Activated CD4-positive, alpha-beta T cell treated with anti-CD3 and anti-CD28 coated beads, Interleukin-2, amount 10 ng/mL, durations not matched to agents 24 days and 14 days (primary cell): ENCODE measurements at regions of chr16 and their contacts with region 1.

Region 1: DNA sequence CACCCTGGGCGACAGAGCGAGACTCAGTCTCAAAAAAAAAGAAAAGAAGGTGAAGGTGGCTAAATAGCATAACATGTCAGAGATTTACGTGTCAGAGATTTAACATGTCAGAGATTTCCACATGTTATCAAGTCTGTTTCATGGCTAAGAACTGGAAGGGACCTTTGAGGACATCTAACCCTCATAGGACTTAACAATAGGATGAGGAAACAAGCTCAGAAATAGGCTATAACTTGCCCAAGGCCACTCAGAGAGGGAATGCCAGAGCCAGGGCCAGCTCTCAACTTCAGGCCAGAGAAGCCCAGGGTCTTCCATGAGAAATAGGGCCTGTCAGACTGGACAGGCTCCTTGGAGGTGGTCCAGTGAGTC is 26.8 kb upstream of the ZNF629 start:
- DNase-seq: no peak
- H3K4me3 Mint-ChIP-seq: peak overlapping the region; percentile 96
- H3K27ac Mint-ChIP-seq: peak overlapping the region; percentile 84
- H3K4me1 Mint-ChIP-seq: peaks cover 10% of the 10 kb centered on the region
- H3K27me3 Mint-ChIP-seq: peaks cover 2% of the 10 kb centered on the region

Region 2: DNA sequence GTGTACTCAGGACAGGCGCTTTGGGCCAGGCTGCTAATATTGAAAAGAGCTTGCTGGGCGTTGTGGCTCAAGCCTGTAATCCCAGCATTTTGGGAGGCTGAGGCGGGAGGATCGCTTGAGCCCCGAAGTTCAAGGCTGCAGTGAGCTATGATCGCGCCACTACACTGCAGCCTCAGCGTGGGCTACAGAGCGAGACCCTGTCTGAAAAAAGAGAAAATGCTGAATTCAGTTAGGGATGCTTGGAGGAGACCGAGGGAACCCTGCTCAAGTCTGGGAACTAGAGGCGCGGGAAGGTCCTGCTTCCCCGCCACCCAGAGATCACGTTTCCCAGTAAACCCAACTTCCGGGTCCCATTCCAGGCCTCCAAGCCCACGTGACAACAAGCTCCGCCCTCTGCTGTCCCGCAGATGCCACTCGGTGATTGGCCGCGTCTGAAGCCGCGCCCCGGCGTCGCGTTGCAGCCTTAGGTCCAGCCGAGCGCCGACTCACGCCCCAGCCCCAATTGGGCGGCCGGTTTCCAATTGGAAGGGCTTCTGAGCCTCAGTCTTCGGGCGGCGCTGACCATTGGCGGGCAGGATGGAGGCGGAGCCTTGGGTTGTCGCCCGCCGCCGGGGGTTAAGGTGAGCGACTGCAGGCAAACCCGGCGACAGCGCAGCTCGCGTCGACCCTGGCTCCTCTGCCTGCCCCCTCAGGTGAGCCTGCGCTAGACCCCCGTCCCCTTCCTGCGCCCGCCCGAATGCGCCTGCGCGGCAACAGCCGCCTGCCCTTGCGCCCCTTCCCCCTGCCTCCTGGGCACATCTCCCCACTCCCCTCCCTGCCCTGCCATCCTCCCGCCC is 65.8 kb before region 1 on chr16 and contains the start of gene PHKG2:
- intact Hi-C with region 1: loop called (anchors 1 kb)
- DNase-seq: peak; percentile 99
- H3K4me3 Mint-ChIP-seq: peak within 1 kb of the TSS; percentile 94
- H3K27ac Mint-ChIP-seq: peak within 1 kb of the TSS; percentile 85
- H3K4me1 Mint-ChIP-seq: peaks cover 21% of the 10 kb centered on the region
- H3K27me3 Mint-ChIP-seq: no peaks in the 10 kb centered on the region
- total RNA-seq, gene PHKG2: 39.5 and 41.0 TPM in 2 replicates

Region 3: GRCh38 chr16:30775392-30776188 is 38.2 kb before region 1 on chr16:
- intact Hi-C with region 1: loop called (anchors 5 kb)
- DNase-seq: peak; percentile 90
- H3K4me3 Mint-ChIP-seq: peak overlapping the region; percentile 91
- H3K27ac Mint-ChIP-seq: peak overlapping the region; percentile 95
- H3K4me1 Mint-ChIP-seq: peaks cover 22% of the 10 kb centered on the region
- H3K27me3 Mint-ChIP-seq: no peaks in the 10 kb centered on the region